CD4-positive, alpha-beta memory T cell (primary cell): ENCODE measurements at regions of chr12 and their contacts with region 1.

Region 1: GRCh38 chr12:47032644-47033043 is 46.8 kb upstream of the PCED1B start:
- DNase-seq: peak; percentile 33 to 65 (median 56)
- H3K4me3 ChIP-seq: no peak overlapping the region
- H3K4me3 Mint-ChIP-seq: no peak overlapping the region
- H3K27ac ChIP-seq: no peak overlapping the region
- H3K27ac Mint-ChIP-seq: peak overlapping the region in 1 of 7 donors; percentile 1
- H3K4me1 ChIP-seq: peaks cover 10% of the 10 kb centered on the region
- H3K4me1 Mint-ChIP-seq: peaks cover 8 to 16% (median 10%) of the 10 kb centered on the region in 4 donors
- H3K27me3 ChIP-seq: no peaks in the 10 kb centered on the region
- H3K27me3 Mint-ChIP-seq: no peaks in the 10 kb centered on the region

Region 2: DNA sequence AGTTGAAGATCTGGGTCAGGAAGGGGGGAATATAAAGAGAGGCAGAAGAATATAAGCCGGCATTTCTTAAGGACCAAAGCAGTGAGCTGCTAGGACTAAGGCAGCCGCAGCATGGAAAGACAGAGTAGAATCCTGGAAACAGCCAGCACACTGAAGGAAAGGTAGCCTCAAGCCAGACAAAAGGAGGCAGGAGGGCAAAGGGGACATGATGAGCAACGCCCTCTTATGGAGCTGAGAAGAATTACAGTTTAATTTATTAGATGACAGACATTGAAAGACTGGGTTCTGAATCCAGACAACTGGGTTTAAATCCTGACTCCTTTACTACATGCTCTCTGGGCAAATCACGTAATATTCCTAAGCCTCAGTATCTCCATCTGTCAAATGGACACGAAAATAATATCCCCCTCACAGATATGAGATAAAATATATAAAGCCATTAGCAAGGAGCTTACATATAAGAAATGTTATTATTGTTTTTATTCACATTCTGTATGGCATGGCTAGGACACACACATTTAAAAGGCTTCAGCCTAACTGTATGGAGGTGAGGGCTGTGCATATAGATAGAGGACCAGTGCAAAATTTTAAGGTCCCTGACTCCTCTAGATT is 38.7 kb after region 1 on chr12:
- CTCF ChIA-PET with region 1: interaction called, 28 read pairs
- POLR2A ChIA-PET with region 1: no interaction called
- intact Hi-C with region 1: no loop called
- DNase-seq: peak in 4 of 5 donors; percentile 15 to 32 (median 26)
- H3K4me3 ChIP-seq: no peak overlapping the region
- H3K4me3 Mint-ChIP-seq: no peak overlapping the region
- H3K27ac ChIP-seq: no peak overlapping the region
- H3K27ac Mint-ChIP-seq: no peak overlapping the region
- H3K4me1 ChIP-seq: no peaks in the 10 kb centered on the region
- H3K4me1 Mint-ChIP-seq: peaks cover 0 to 7% (median 3%) of the 10 kb centered on the region in 4 donors
- H3K27me3 ChIP-seq: no peaks in the 10 kb centered on the region
- H3K27me3 Mint-ChIP-seq: no peaks in the 10 kb centered on the region

Region 3: DNA sequence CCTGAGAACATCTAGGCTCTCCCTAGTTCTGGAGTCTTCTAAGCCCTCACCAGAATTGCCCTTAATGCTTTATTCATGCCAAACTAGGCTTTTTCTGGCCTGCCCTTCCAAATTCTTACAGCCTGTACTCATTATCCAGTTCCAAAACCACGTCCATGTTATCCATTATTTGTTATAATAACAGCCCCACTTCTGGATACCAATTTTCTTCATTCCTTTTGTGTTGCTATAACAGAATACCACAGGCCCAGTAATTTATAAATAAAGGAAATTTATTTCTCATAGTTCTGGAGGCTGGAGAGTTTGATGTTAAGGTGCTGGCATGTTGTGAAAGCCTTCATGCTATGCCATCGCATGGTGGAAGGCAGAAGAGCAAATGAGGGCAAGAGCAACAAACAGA is 115.1 kb after region 1 on chr12:
- CTCF ChIA-PET with region 1: no interaction called
- POLR2A ChIA-PET with region 1: no interaction called
- intact Hi-C with region 1: no loop called
- DNase-seq: no peak
- H3K4me3 ChIP-seq: no peak overlapping the region
- H3K4me3 Mint-ChIP-seq: no peak overlapping the region
- H3K27ac ChIP-seq: no peak overlapping the region
- H3K27ac Mint-ChIP-seq: peak overlapping the region in 1 of 7 donors; percentile 48
- H3K4me1 ChIP-seq: peaks cover 17% of the 10 kb centered on the region
- H3K4me1 Mint-ChIP-seq: peaks cover 18 to 32% (median 21%) of the 10 kb centered on the region in 4 donors
- H3K27me3 ChIP-seq: no peaks in the 10 kb centered on the region
- H3K27me3 Mint-ChIP-seq: no peaks in the 10 kb centered on the region

Region 4: DNA sequence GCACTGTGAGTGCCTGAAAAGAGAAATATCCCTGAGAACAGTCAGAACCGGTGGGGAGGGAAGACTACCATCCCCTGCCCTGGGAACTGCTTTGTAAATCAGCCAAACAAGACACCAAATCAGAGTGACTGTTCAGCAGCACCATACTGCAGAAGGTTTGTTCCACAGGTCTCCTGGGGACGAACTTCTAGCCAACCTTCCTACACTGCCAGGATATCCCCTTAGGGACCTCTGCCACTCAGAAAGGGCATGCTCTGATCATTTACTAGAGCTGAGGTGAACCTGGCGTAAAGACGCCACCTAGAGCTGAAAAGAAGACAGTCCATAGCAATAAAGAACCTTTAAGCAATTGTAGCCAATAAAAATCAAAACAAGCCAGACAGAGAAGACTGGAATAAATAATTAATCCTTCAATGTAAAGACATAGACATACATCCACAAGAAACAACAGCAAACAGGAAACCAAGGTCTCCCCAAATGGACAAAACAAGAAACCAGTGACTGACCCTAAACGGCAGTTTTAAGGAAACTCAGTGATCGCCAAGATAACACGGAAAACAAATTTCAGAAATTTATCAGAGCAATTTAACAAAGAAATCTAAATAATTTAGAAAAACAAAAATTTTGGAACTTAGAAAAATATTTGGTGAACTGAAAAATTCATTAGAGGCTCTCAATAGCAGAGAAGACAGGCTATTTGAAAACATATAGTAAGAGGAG is 275.2 kb after region 1 on chr12:
- CTCF ChIA-PET with region 1: interaction called, 53 read pairs
- POLR2A ChIA-PET with region 1: interaction called, 15 read pairs
- intact Hi-C with region 1: loop called (anchors 1 kb)
- DNase-seq: peak; percentile 64 to 72 (median 66)
- H3K4me3 ChIP-seq: peak overlapping the region; percentile 78 to 82
- H3K4me3 Mint-ChIP-seq: peak overlapping the region; percentile 89 to 99 (median 94)
- H3K27ac ChIP-seq: peak overlapping the region; percentile 51
- H3K27ac Mint-ChIP-seq: peak overlapping the region; percentile 82 to 95 (median 93)
- H3K4me1 ChIP-seq: peaks cover 13% of the 10 kb centered on the region
- H3K4me1 Mint-ChIP-seq: peaks cover 21 to 43% (median 32%) of the 10 kb centered on the region in 4 donors
- H3K27me3 ChIP-seq: no peaks in the 10 kb centered on the region
- H3K27me3 Mint-ChIP-seq: no peaks in the 10 kb centered on the region

Region 5: DNA sequence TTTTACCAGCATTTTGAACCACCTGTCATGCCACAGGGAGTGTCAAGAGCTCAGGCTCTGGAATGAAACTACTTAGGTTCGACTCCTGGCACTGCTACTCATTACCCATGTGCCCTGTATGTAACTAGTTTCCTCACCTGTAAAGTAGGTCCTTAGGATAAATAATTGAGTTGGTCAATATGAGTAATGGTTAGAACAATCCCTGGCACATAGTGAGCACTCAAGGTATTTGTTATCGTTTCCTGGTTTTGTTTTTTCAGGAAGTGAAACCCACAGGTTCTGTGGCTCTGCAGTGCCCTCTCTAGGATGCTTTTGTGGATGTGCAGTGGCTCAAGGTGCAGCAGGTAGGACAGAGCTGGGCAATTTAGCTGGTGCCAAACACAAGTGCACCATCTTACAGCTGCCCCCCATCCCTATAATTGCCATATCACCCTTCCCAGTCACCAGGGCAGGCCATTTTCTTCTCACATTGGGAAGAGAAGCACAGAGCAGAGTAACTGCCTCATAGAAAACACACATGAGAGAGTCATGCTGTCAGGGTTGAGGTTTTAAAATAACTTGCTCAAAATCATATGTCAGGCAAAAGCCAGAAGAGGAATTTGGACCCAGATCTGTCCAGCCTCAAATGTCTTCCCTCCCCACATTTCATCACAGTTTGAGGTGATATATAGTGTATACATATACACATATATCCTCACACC is 375.7 kb after region 1 on chr12:
- CTCF ChIA-PET with region 1: interaction called, 40 read pairs
- POLR2A ChIA-PET with region 1: interaction called, 6 read pairs
- intact Hi-C with region 1: loop called (anchors 1 kb)
- DNase-seq: peak; percentile 39 to 48 (median 44)
- H3K4me3 ChIP-seq: peak overlapping the region in 1 of 2 donors; percentile 24
- H3K4me3 Mint-ChIP-seq: peak overlapping the region in 5 of 8 donors; percentile 12 to 48 (median 39)
- H3K27ac ChIP-seq: no peak overlapping the region
- H3K27ac Mint-ChIP-seq: peak overlapping the region in 4 of 7 donors; percentile 1 to 58 (median 33)
- H3K4me1 ChIP-seq: peaks cover 44% of the 10 kb centered on the region
- H3K4me1 Mint-ChIP-seq: peaks cover 41 to 74% (median 50%) of the 10 kb centered on the region in 4 donors
- H3K27me3 ChIP-seq: no peaks in the 10 kb centered on the region
- H3K27me3 Mint-ChIP-seq: no peaks in the 10 kb centered on the region

Region 6: GRCh38 chr12:47651368-47652254 is 619.0 kb after region 1 on chr12:
- CTCF ChIA-PET with region 1: interaction called, 9 read pairs
- POLR2A ChIA-PET with region 1: no interaction called
- intact Hi-C with region 1: loop called (anchors 5 kb)
- DNase-seq: peak; percentile 55 to 64 (median 60)
- H3K4me3 ChIP-seq: no peak overlapping the region
- H3K4me3 Mint-ChIP-seq: peak overlapping the region; percentile 37 to 77 (median 74)
- H3K27ac ChIP-seq: no peak overlapping the region
- H3K27ac Mint-ChIP-seq: peak overlapping the region in 6 of 7 donors; percentile 38 to 72 (median 70)
- H3K4me1 ChIP-seq: peaks cover 5% of the 10 kb centered on the region
- H3K4me1 Mint-ChIP-seq: peaks cover 5 to 10% (median 8%) of the 10 kb centered on the region in 4 donors
- H3K27me3 ChIP-seq: no peaks in the 10 kb centered on the region
- H3K27me3 Mint-ChIP-seq: no peaks in the 10 kb centered on the region